ENCODE measurements at regions of chr1 and their contacts with region 1.

Region 1: GRCh38 chr1:147700042-147701006 is 30.0 kb upstream of the ACP6 start:
- DNase-seq: peak; percentile 47
- H3K4me3 ChIP-seq: no peak overlapping the region
- H3K27ac ChIP-seq: no peak overlapping the region
- H3K4me1 ChIP-seq: no peaks in the 10 kb centered on the region
- H3K27me3 ChIP-seq: no peaks in the 10 kb centered on the region
- CTCF ChIP-seq: peak; percentile 97

Region 2: GRCh38 chr1:147515046-147515869 is 185.1 kb before region 1 on chr1:
- CTCF ChIA-PET with region 1: no interaction called
- dilution Hi-C with region 1: no loop called
- in situ Hi-C with region 1: no loop called
- intact Hi-C with region 1: loop called (anchors 2 kb)
- DNase-seq: peak; percentile 64
- H3K4me3 ChIP-seq: no peak overlapping the region
- H3K27ac ChIP-seq: no peak overlapping the region
- H3K4me1 ChIP-seq: no peaks in the 10 kb centered on the region
- H3K27me3 ChIP-seq: peaks cover 3% of the 10 kb centered on the region
- CTCF ChIP-seq: peak in 1 of 2 donors; percentile 47

Region 3: GRCh38 chr1:147635342-147635741 is 65.0 kb before region 1 on chr1:
- CTCF ChIA-PET with region 1: no interaction called
- dilution Hi-C with region 1: no loop called
- in situ Hi-C with region 1: loop called in 1 of 2 experiments (anchors 5 kb)
- intact Hi-C with region 1: loop called (anchors 1 kb)
- DNase-seq: no peak
- H3K4me3 ChIP-seq: no peak overlapping the region
- H3K27ac ChIP-seq: no peak overlapping the region
- H3K4me1 ChIP-seq: no peaks in the 10 kb centered on the region
- H3K27me3 ChIP-seq: no peaks in the 10 kb centered on the region
- CTCF ChIP-seq: no peak

Region 4: DNA sequence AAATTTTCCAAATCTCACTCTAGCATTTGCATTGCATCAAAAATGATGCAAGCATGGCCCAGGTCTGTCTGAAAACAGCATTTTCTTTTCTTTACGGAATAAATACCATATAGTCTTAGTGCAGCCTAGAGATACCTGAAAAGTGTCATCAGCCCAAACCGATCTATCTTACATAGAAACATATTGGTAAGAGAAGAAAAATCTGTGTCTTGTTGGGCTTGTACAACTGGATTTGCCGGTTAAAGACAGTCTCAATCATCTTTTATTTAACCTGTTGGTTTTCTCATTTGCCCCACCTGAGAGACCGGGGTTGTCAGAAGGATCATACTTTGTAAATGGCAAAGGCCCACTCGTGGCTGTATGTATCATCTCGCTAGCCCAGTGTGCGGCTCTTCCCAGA is 45.8 kb before region 1 on chr1:
- CTCF ChIA-PET with region 1: no interaction called
- dilution Hi-C with region 1: no loop called
- in situ Hi-C with region 1: no loop called
- intact Hi-C with region 1: no loop called
- DNase-seq: no peak
- H3K4me3 ChIP-seq: no peak overlapping the region
- H3K27ac ChIP-seq: no peak overlapping the region
- H3K4me1 ChIP-seq: no peaks in the 10 kb centered on the region
- H3K27me3 ChIP-seq: no peaks in the 10 kb centered on the region
- CTCF ChIP-seq: no peak

Region 5: DNA sequence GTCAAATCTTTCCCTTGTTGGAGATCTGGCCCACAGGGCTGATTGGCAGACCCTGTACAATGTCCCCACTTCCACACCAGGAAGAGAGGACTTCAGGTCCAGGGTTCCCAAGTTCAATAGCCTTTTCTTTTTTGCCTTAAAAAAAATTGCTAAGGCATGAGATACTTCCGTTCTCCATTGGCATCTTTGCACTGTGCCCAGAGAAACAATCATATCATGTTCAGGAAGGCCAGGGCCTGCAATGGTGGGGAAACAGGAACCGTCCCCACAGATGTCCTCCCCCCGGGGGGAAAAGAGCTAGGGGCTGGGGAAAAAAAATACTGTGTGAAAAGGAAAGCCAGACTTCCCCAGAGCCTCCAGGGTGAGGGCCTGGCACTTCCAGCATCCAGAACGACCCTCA is 177.7 kb after region 1 on chr1:
- CTCF ChIA-PET with region 1: no interaction called
- dilution Hi-C with region 1: no loop called
- in situ Hi-C with region 1: loop called in 1 of 2 experiments (anchors 10 kb)
- intact Hi-C with region 1: no loop called
- DNase-seq: no peak
- H3K4me3 ChIP-seq: no peak overlapping the region
- H3K27ac ChIP-seq: no peak overlapping the region
- H3K4me1 ChIP-seq: no peaks in the 10 kb centered on the region
- H3K27me3 ChIP-seq: no peaks in the 10 kb centered on the region
- CTCF ChIP-seq: no peak

Measured in mammary epithelial cell (primary cell).